OCI-LY7 (cell line): ENCODE measurements at regions of chr1 and their contacts with region 1.

Region 1: DNA sequence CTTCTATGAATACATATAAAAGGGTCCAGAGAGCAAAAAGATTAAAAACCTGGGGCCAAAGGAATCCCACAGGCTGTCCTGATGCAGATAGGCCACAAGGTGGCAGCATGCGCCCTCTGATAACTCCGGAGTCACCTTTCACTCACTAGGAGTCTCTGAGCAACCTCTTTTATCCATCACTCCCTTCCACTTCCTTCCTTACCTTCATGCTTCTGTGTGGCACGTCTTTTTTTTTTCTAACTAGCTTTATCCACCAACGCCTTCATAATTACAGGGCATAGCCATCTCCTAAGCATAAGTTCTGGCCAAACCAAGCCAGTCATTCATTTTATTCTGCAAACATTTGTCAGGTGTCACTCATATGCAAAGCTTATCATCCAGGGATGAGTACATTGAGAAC is 3.9 kb upstream of the PGLYRP4 start:
- DNase-seq: peak; percentile 65
- H3K4me3 ChIP-seq: no peak overlapping the region
- H3K27ac ChIP-seq: no peak overlapping the region
- H3K4me1 ChIP-seq: no peaks in the 10 kb centered on the region
- CTCF ChIP-seq: peak; percentile 98

Region 2: GRCh38 chr1:153404768-153405167 is 52.2 kb after region 1 on chr1:
- CTCF ChIA-PET with region 1: no interaction called
- POLR2A ChIA-PET with region 1: no interaction called
- intact Hi-C with region 1: loop called (anchors 2 kb)
- DNase-seq: peak; percentile 45
- H3K4me3 ChIP-seq: no peak overlapping the region
- H3K27ac ChIP-seq: no peak overlapping the region
- H3K4me1 ChIP-seq: no peaks in the 10 kb centered on the region
- CTCF ChIP-seq: peak; percentile 80

Region 3: GRCh38 chr1:153494976-153495535 is 142.5 kb after region 1 on chr1:
- CTCF ChIA-PET with region 1: no interaction called
- POLR2A ChIA-PET with region 1: no interaction called
- intact Hi-C with region 1: loop called (anchors 1 kb)
- DNase-seq: peak; percentile 70
- H3K4me3 ChIP-seq: no peak overlapping the region
- H3K27ac ChIP-seq: no peak overlapping the region
- H3K4me1 ChIP-seq: no peaks in the 10 kb centered on the region
- CTCF ChIP-seq: peak; percentile 89

Region 4: GRCh38 chr1:153749408-153750005 is 397.0 kb after region 1 on chr1:
- CTCF ChIA-PET with region 1: no interaction called
- POLR2A ChIA-PET with region 1: no interaction called
- intact Hi-C with region 1: loop called (anchors 10 kb)
- DNase-seq: peak; percentile 82
- H3K4me3 ChIP-seq: no peak overlapping the region
- H3K27ac ChIP-seq: no peak overlapping the region
- H3K4me1 ChIP-seq: no peaks in the 10 kb centered on the region
- CTCF ChIP-seq: peak; percentile 96